ENCODE measurements at regions of chr1 and their contacts with region 1.

Region 1: GRCh38 chr1:206982216-206982615 is 12.0 kb upstream of the FCAMR start:
- DNase-seq: peak; percentile 77

Region 2: DNA sequence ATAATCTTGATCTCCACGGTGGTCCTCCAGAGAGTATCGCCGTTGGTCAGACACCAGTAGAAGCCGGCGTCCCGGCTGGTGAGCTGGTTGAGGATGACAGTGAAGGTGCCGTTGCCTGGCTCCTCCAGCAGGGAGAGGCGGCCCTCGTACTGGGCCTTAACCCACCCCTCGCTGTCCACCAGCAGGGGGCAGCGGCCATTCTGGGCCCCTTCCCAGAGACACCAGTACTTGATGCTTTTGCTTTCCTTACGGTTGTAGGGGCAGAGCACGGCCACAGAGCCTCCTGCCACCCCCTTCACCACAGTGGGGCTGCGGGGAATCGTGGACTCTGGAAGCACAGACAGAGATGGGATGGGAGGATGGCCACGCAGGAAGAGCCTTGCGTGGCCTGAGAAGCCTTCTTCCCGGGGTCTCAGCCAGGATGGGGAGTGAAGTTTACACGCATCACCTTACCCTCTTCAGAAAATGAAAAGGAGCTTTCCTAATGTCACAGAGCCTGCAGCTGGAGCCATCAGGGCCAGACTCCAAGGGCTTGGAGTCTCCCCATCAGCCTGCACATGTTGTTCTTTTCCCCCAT is 46.6 kb before region 1 on chr1:
- CTCF ChIA-PET with region 1: interaction called, 11 read pairs
- POLR2A ChIA-PET with region 1: no interaction called
- DNase-seq: peak; percentile 79

Measured in HEK293T (cell line).